Activated CD8-positive, alpha-beta memory T cell treated with anti-CD3 and anti-CD28 coated beads, Interleukin-2, amount 10 ng/mL, durations not matched to agents 7 days and 5 days (primary cell): ENCODE measurements at regions of chr1 and their contacts with region 1.

Region 1: DNA sequence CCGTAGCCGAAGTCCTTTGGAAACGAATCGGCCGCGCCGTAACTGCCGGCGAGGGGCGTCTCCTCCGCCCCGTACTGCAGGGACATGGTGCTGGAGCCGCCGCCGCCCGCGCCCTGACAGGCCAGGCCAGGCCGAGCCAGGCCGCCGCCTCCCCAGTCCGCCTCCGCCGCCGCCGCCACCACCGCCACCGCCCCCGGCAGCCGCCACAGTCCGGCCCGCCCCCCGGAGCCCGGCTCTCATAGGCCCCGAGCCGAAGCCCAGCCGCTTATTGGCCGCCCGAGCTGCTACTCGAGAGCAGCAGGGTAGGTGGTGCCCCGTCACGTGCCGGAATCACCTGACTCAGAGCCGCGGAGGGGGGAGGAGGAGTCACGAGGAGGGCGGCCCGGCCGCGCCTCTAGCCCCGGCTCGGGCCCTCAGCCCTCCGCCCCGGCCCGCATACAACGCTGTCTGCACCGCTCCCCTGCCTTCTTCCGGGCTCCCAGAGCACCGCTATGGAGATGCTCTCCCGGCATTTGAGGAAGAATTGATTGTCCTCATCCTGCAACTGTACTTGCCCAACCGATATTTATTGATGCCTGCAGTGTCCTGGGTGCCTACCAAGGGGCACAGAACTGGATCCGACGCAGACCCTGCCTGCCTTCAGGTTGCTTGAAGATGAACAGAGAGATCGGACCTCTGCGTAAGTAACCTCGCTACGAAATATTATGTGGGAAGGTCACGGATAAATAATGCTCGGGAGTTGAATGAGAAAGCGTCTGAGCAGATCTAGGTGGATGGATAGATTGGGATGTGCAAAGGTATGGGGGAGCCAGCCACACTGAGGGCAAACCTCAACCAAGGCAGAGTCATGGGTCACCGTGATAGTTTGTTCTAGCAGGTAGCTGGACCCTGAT is at the start of gene RRAGC:
- DNase-seq: peak; percentile 100
- ATAC-seq: peak; percentile 98
- H3K4me3 Mint-ChIP-seq: peak within 1 kb of the TSS; percentile 89
- H3K27ac Mint-ChIP-seq: peak within 1 kb of the TSS; percentile 82
- H3K4me1 Mint-ChIP-seq: peaks cover 40% of the 10 kb centered on the region
- H3K27me3 Mint-ChIP-seq: no peaks in the 10 kb centered on the region
- total RNA-seq, gene RRAGC: 12.0 to 16.7 TPM

Region 2: DNA sequence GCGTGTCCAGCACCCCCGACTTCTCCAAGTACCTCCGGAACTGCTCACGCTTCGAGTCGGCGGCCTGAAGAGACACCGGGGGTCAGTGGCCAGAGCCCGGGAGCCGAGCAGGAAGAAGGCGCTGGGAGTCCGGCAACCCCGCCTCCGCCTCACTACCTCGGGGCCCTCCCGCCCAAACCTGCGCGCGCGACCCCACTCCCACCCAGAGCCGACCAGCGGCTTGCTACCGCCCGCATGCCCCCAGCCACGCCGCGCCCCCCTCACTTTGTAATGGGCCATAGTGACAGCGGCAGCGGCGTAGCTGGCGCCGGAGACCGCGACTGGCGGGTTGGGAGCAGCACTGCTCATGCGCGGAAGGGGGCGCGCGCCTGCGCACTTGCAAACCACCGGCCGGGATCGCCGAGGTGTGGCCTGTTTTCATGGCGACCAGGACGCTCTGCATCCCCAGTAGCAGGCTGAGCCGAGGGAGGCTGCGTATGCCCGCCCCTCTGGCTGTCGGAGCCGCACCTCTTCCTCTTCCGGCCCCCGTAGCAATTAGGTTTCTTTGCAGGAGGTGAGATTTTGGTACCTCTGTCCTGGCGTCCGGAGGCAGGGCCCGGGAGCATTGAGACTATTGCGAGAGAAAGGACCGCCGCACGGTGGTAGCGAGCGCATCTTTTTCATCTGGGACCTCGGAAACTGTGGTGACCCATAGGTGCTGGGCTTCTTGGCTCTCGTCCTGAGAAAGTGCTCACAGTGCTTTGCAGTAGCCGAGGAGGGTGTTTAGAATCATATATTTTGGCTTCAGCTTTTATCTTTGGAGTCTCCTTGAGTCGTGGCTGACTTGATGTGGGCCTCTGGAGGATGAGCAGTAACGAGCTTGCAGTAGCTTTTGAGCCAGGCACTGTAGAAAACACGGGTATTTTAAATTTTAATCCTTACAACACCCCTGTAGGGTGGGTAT is 13.5 kb after region 1 on chr1 and contains the start of gene MYCBP:
- CTCF ChIA-PET with region 1: interaction called, 13 read pairs
- DNase-seq: peak; percentile 98
- ATAC-seq: peak; percentile 99
- H3K4me3 Mint-ChIP-seq: peak within 1 kb of the TSS; percentile 87
- H3K27ac Mint-ChIP-seq: peak within 1 kb of the TSS; percentile 83
- H3K4me1 Mint-ChIP-seq: peaks cover 32% of the 10 kb centered on the region
- H3K27me3 Mint-ChIP-seq: no peaks in the 10 kb centered on the region
- total RNA-seq, gene MYCBP: 45.0 to 45.3 TPM

Region 3: GRCh38 chr1:39776400-39776713 is 916.5 kb after region 1 on chr1:
- CTCF ChIA-PET with region 1: no interaction called
- DNase-seq: no peak
- ATAC-seq: no peak
- H3K4me3 Mint-ChIP-seq: no peak overlapping the region
- H3K27ac Mint-ChIP-seq: no peak overlapping the region
- H3K4me1 Mint-ChIP-seq: peaks cover 3% of the 10 kb centered on the region
- H3K27me3 Mint-ChIP-seq: peaks cover 3% of the 10 kb centered on the region